Activated T-helper 1 cell treated with anti-CD3 and anti-CD28 coated beads, Interleukin-12 subunit alpha, Interleukin-12 subunit beta, Interleukin-2, Interleukin-4 antibody, amounts not matched to agents 30 ng/mL and 10 ng/mL and 1 ng/mL, durations not matched to agents 14 hours and 24 hours and 36 hours (primary cell): ENCODE measurements at regions of chr1 and their contacts with region 1.

Region 1: GRCh38 chr1:160539990-160540858 is 17.2 kb upstream of the SLAMF6 start:
- DNase-seq: peak; percentile 64
- H3K4me3 Mint-ChIP-seq: peak overlapping the region; percentile 38
- H3K27ac Mint-ChIP-seq: peak overlapping the region; percentile 90
- H3K4me1 Mint-ChIP-seq: peaks cover 46% of the 10 kb centered on the region
- H3K27me3 Mint-ChIP-seq: no peaks in the 10 kb centered on the region

Region 2: DNA sequence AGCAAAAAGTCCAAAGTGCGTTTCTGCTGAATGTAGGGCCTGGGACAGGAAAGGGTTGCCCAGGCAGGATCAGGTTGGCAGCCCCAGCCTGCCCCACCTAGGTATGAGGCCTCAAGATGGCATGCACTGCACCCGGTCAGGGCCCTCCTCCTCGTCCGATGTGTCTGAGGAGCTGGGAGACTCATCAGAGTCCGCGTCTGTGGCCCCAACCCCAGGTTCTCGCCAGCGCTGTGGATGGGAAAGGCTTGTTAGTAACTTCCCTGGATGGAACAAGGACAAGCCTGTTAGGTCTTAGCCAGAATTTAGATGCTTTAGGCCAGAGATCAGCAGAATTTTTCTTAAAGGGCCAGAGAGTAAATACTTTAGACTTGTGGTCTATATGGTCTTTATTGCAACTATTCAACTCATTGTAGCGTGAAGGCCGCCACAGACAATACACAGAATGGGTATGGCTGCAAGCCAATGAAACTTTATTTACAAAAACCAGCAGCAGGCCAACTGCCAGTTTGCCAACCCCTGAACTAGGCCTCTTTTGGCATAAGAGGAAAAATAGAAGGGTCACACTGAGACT is 322.7 kb before region 1 on chr1:
- intact Hi-C with region 1: no loop called
- DNase-seq: no peak
- H3K4me3 Mint-ChIP-seq: no peak overlapping the region
- H3K27ac Mint-ChIP-seq: no peak overlapping the region
- H3K4me1 Mint-ChIP-seq: no peaks in the 10 kb centered on the region
- H3K27me3 Mint-ChIP-seq: no peaks in the 10 kb centered on the region

Region 3: GRCh38 chr1:160428655-160429054 is 111.6 kb before region 1 on chr1:
- intact Hi-C with region 1: loop called (anchors 1 kb)
- DNase-seq: peak; percentile 15
- H3K4me3 Mint-ChIP-seq: no peak overlapping the region
- H3K27ac Mint-ChIP-seq: peak overlapping the region; percentile 91
- H3K4me1 Mint-ChIP-seq: peaks cover 59% of the 10 kb centered on the region
- H3K27me3 Mint-ChIP-seq: no peaks in the 10 kb centered on the region

Region 4: DNA sequence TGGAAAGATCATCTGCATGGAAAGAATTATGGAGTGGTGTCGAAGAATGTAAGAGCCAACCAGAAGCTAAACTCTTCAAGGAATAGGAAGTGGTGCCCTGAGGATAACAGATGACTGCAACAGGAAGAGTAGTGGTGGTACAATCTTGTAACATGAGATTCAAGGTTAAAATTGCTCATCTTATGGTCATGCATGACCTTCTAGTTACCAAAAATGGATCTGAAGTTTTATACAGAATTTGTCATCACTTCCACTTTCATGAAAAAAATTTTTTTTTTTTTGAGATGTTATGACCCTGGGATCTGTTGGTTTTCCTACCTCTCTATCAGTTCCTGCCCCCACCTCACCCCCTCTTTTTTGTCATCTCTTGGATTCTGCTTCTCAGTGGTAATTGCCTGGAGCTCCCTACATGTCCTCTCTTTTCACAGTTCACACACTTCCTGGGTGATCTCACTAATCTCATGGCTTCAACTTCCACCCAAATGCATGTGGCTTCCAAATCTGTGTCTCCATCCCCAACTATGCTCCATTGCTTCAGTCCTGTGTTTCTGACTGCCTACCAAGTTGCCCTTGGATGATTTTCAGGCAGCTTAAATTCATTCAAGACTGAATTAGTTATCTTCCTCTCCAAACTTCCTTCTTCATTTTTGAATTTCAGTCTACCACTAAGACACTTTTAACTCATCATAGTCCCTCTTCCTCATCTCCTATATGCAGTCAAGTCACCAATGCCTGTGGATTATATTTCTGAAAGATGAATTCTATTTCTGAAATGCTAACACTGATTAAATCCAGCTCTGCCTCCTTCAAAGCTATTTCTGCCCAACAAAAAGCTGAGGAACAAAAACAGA is 65.6 kb before region 1 on chr1:
- intact Hi-C with region 1: loop called (anchors 2 kb)
- DNase-seq: no peak
- H3K4me3 Mint-ChIP-seq: no peak overlapping the region
- H3K27ac Mint-ChIP-seq: no peak overlapping the region
- H3K4me1 Mint-ChIP-seq: no peaks in the 10 kb centered on the region
- H3K27me3 Mint-ChIP-seq: no peaks in the 10 kb centered on the region

Region 5: GRCh38 chr1:160496334-160496733 is 43.9 kb before region 1 on chr1:
- intact Hi-C with region 1: loop called (anchors 2 kb)
- DNase-seq: no peak
- H3K4me3 Mint-ChIP-seq: no peak overlapping the region
- H3K27ac Mint-ChIP-seq: no peak overlapping the region
- H3K4me1 Mint-ChIP-seq: peaks cover 22% of the 10 kb centered on the region
- H3K27me3 Mint-ChIP-seq: no peaks in the 10 kb centered on the region

Region 6: GRCh38 chr1:160560045-160560705 is 20.0 kb after region 1 on chr1:
- intact Hi-C with region 1: loop called (anchors 2 kb)
- DNase-seq: no peak
- H3K4me3 Mint-ChIP-seq: peak overlapping the region; percentile 75
- H3K27ac Mint-ChIP-seq: peak overlapping the region; percentile 87
- H3K4me1 Mint-ChIP-seq: peaks cover 56% of the 10 kb centered on the region
- H3K27me3 Mint-ChIP-seq: no peaks in the 10 kb centered on the region

Region 7: GRCh38 chr1:160567858-160568682 is 27.8 kb after region 1 on chr1:
- intact Hi-C with region 1: loop called (anchors 1 kb)
- DNase-seq: peak; percentile 50
- H3K4me3 Mint-ChIP-seq: peak overlapping the region; percentile 60
- H3K27ac Mint-ChIP-seq: peak overlapping the region; percentile 95
- H3K4me1 Mint-ChIP-seq: peaks cover 83% of the 10 kb centered on the region
- H3K27me3 Mint-ChIP-seq: no peaks in the 10 kb centered on the region

Region 8: GRCh38 chr1:160575112-160575664 is 35.0 kb after region 1 on chr1:
- intact Hi-C with region 1: loop called (anchors 1 kb)
- DNase-seq: no peak
- H3K4me3 Mint-ChIP-seq: peak overlapping the region; percentile 79
- H3K27ac Mint-ChIP-seq: peak overlapping the region; percentile 84
- H3K4me1 Mint-ChIP-seq: peaks cover 96% of the 10 kb centered on the region
- H3K27me3 Mint-ChIP-seq: no peaks in the 10 kb centered on the region

Region 9: GRCh38 chr1:160971618-160972056 is 431.4 kb after region 1 on chr1:
- intact Hi-C with region 1: no loop called
- DNase-seq: no peak
- H3K4me3 Mint-ChIP-seq: no peak overlapping the region
- H3K27ac Mint-ChIP-seq: no peak overlapping the region
- H3K4me1 Mint-ChIP-seq: no peaks in the 10 kb centered on the region
- H3K27me3 Mint-ChIP-seq: peaks cover 15% of the 10 kb centered on the region